ENCODE measurements at regions of chr19 and their contacts with region 1.

Region 1: GRCh38 chr19:6632002-6632621 is 37.8 kb downstream of the TNFSF14 start:
- DNase-seq: peak; percentile 84
- ATAC-seq: peak; percentile 82
- H3K4me3 ChIP-seq: no peak overlapping the region
- H3K27ac ChIP-seq: peak overlapping the region; percentile 53
- H3K4me1 ChIP-seq: peaks cover 12% of the 10 kb centered on the region
- H3K27me3 ChIP-seq: no peaks in the 10 kb centered on the region
- CTCF ChIP-seq: peak; percentile 77 to 85 (median 80)
- EP300 ChIP-seq: no peak
- POLR2A ChIP-seq: no peak
- RAD21 ChIP-seq: peak; percentile 86

Region 2: GRCh38 chr19:6516659-6517291 is 115.3 kb before region 1 on chr19:
- CTCF ChIA-PET with region 1: interaction called, 29 read pairs
- POLR2A ChIA-PET with region 1: interaction called, 8 read pairs
- RAD21 ChIA-PET with region 1: interaction called, 35 read pairs
- SMC1A ChIA-PET with region 1: interaction called, 23 read pairs
- in situ Hi-C with region 1: no loop called
- intact Hi-C with region 1: loop called (anchors 1 kb)
- DNase-seq: no peak
- ATAC-seq: peak; percentile 83
- H3K4me3 ChIP-seq: peak overlapping the region; percentile 92
- H3K27ac ChIP-seq: peak overlapping the region; percentile 98
- H3K4me1 ChIP-seq: peaks cover 33% of the 10 kb centered on the region
- H3K27me3 ChIP-seq: no peaks in the 10 kb centered on the region
- CTCF ChIP-seq: peak; percentile 96 to 99 (median 97); a peak in 5 of 6 replicates
- EP300 ChIP-seq: 0 out of 4 replicates have a peak, but pooled peaks of 1 of the 2 experiments have one; percentile 13
- POLR2A ChIP-seq: peak; percentile 63; the same call in 1 of the 2 replicates
- RAD21 ChIP-seq: peak; percentile 100

Region 3: GRCh38 chr19:6564393-6564792 is 67.7 kb before region 1 on chr19:
- CTCF ChIA-PET with region 1: interaction called, 8 read pairs
- POLR2A ChIA-PET with region 1: interaction called, 3 read pairs
- RAD21 ChIA-PET with region 1: interaction called, 4 read pairs
- SMC1A ChIA-PET with region 1: interaction called, 10 read pairs
- in situ Hi-C with region 1: no loop called
- intact Hi-C with region 1: no loop called
- DNase-seq: no peak
- ATAC-seq: peak; percentile 56
- H3K4me3 ChIP-seq: no peak overlapping the region
- H3K27ac ChIP-seq: no peak overlapping the region
- H3K4me1 ChIP-seq: no peaks in the 10 kb centered on the region
- H3K27me3 ChIP-seq: no peaks in the 10 kb centered on the region
- CTCF ChIP-seq: no peak
- EP300 ChIP-seq: no peak
- POLR2A ChIP-seq: no peak
- RAD21 ChIP-seq: no peak

Region 4: DNA sequence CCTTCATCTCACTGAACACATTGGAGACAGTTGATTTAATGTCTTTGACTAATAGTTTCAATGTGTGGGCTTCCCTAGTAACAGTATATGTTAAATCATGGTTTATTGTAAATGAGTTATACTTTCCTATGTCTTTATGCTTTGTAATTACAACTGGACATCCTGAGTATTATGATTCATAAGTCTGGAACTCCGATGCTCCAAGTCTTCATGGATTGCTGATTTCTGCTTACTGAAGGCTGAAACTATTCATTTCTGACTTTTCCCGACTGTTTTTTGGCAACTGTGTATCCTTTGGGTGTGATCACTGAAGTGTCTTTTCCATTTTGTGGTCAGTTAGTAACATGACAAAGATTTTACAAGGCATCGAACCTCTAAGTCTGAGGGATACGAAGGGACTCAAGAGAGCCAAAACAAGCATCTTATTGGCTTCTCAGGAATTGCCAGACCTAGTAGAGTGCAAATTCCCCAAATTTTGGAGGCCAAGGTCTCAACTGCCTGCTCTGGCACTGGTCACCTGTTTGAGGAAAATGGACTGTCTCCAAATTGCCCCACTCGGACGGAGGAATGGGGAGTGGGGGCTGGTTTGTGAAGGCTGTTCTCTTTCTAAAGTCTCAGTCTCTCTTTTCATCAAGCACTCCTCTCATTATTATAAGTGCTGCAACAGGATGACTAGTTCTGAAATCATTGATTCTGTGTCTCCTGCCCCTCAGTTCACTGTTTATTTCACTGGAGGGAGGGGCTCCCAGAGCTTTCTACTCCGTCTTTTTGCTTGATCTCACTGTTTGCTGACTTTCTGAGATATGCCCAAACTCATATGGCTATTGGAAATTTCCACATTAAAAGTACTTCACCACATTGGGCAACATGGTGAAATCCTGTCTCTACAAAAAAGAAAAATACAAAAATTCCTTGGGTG is 20.9 kb before region 1 on chr19:
- CTCF ChIA-PET with region 1: interaction called, 6 read pairs
- POLR2A ChIA-PET with region 1: interaction called, 3 read pairs
- RAD21 ChIA-PET with region 1: interaction called, 6 read pairs
- SMC1A ChIA-PET with region 1: interaction called, 15 read pairs
- in situ Hi-C with region 1: no loop called
- intact Hi-C with region 1: no loop called
- DNase-seq: no peak
- ATAC-seq: no peak
- H3K4me3 ChIP-seq: no peak overlapping the region
- H3K27ac ChIP-seq: peak overlapping the region; percentile 27; the same call in 1 of the 2 replicates
- H3K4me1 ChIP-seq: peaks cover 35% of the 10 kb centered on the region
- H3K27me3 ChIP-seq: no peaks in the 10 kb centered on the region
- CTCF ChIP-seq: no peak
- EP300 ChIP-seq: no peak
- POLR2A ChIP-seq: no peak
- RAD21 ChIP-seq: no peak

Region 5: GRCh38 chr19:6753178-6754031 is 121.3 kb after region 1 on chr19:
- CTCF ChIA-PET with region 1: interaction called, 3 read pairs
- POLR2A ChIA-PET with region 1: no interaction called
- RAD21 ChIA-PET with region 1: interaction called, 3 read pairs
- SMC1A ChIA-PET with region 1: no interaction called
- in situ Hi-C with region 1: no loop called
- intact Hi-C with region 1: loop called (anchors 5 kb)
- DNase-seq: peak; percentile 57
- ATAC-seq: peak; percentile 96
- H3K4me3 ChIP-seq: peak overlapping the region; percentile 48; the same call in 1 of the 2 replicates
- H3K27ac ChIP-seq: peak overlapping the region; percentile 64
- H3K4me1 ChIP-seq: peaks cover 18% of the 10 kb centered on the region
- H3K27me3 ChIP-seq: no peaks in the 10 kb centered on the region
- CTCF ChIP-seq: peak; percentile 52 to 75 (median 58)
- EP300 ChIP-seq: no peak
- POLR2A ChIP-seq: peak; percentile 80
- RAD21 ChIP-seq: peak; percentile 50; the same call in 1 of the 2 replicates